ENCODE measurements at regions of chr5 and their contacts with region 1.

Region 1: GRCh38 chr5:96868603-96869371 is 7.5 kb upstream of the ERAP2 start:
- DNase-seq: peak; percentile 90
- H3K4me3 ChIP-seq: no peak overlapping the region
- H3K27ac ChIP-seq: no peak overlapping the region
- H3K4me1 ChIP-seq: peaks cover 47% of the 10 kb centered on the region
- CTCF ChIP-seq: peak; percentile 100

Region 2: DNA sequence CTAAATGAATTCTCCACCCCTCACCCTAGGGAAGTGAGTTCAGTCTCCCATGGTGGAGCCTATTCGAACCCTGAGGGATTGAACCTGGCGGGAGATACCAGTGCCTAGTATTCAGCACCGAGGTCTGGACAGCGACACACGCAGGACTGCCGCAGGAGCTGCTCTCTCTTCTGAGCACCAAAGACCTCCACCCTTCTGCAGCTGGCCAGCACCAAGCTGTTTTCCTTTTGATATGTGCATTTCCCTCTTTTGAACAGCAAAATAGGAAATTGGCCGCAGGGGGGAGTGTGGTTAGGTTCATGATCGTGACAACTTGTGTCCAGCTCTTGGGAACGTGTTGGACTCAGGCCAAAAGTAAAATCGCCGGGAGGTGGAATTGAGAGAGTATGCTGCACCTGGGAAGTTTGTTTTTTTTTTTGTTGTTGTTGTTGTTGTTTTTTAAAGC is 434.6 kb before region 1 on chr5:
- CTCF ChIA-PET with region 1: no interaction called
- POLR2A ChIA-PET with region 1: no interaction called
- intact Hi-C with region 1: no loop called
- DNase-seq: peak; percentile 5
- H3K4me3 ChIP-seq: no peak overlapping the region
- H3K27ac ChIP-seq: no peak overlapping the region
- H3K4me1 ChIP-seq: peaks cover 4% of the 10 kb centered on the region
- CTCF ChIP-seq: no peak

Region 3: GRCh38 chr5:96729156-96729555 is 139.6 kb before region 1 on chr5:
- CTCF ChIA-PET with region 1: no interaction called
- POLR2A ChIA-PET with region 1: no interaction called
- intact Hi-C with region 1: no loop called
- DNase-seq: no peak
- H3K4me3 ChIP-seq: no peak overlapping the region
- H3K27ac ChIP-seq: no peak overlapping the region
- H3K4me1 ChIP-seq: peaks cover 4% of the 10 kb centered on the region
- CTCF ChIP-seq: peak; percentile 72

Region 4: GRCh38 chr5:96807075-96807654 is 61.6 kb before region 1 on chr5:
- CTCF ChIA-PET with region 1: interaction called, 4 read pairs
- POLR2A ChIA-PET with region 1: interaction called, 9 read pairs
- intact Hi-C with region 1: loop called (anchors 2 kb)
- DNase-seq: peak; percentile 55
- H3K4me3 ChIP-seq: peak overlapping the region; percentile 84
- H3K27ac ChIP-seq: peak overlapping the region; percentile 75
- H3K4me1 ChIP-seq: peaks cover 46% of the 10 kb centered on the region
- CTCF ChIP-seq: no peak

Region 5: GRCh38 chr5:96963267-96963666 is 94.5 kb after region 1 on chr5:
- CTCF ChIA-PET with region 1: interaction called, 5 read pairs
- POLR2A ChIA-PET with region 1: interaction called, 53 read pairs
- intact Hi-C with region 1: loop called (anchors 2 kb)
- DNase-seq: peak; percentile 75
- H3K4me3 ChIP-seq: peak overlapping the region; percentile 82
- H3K27ac ChIP-seq: peak overlapping the region; percentile 98
- H3K4me1 ChIP-seq: peaks cover 48% of the 10 kb centered on the region
- CTCF ChIP-seq: no peak

Region 6: DNA sequence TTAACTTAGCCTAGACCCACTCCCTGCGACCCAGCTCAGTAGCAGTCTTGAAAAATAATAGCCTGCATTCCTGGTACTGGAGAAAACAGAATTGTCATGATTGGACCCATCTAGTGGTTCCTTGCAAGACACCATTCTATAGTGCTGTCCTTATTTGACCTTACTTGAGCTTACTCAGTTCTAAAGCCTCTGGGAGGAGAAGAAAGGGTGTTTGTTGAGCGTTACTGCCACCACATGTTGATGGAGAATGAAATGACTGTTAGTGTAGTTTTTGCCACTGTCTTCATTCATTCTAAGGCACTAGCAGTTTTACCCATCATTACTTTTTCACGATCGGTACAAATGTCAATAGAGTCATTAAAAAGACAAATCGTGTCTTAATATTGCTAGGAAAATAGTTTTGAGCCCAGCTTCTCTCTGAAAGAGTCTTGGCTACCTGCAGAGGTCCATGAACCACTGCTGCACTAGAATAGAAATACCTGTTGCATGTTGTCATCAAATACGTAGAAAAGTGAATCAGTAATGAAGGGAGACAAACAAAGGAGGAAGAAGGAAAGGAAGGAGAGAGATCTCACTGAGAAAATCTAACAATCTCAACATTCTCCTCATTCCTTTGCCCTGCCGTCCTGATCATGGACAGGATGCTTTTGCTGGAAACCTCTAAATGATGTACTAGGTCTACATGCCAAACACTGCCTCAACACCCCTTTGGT is 177.6 kb after region 1 on chr5:
- CTCF ChIA-PET with region 1: no interaction called
- POLR2A ChIA-PET with region 1: no interaction called
- intact Hi-C with region 1: loop called (anchors 5 kb)
- DNase-seq: peak; percentile 36
- H3K4me3 ChIP-seq: no peak overlapping the region
- H3K27ac ChIP-seq: no peak overlapping the region
- H3K4me1 ChIP-seq: no peaks in the 10 kb centered on the region
- CTCF ChIP-seq: peak; percentile 50

Region 7: DNA sequence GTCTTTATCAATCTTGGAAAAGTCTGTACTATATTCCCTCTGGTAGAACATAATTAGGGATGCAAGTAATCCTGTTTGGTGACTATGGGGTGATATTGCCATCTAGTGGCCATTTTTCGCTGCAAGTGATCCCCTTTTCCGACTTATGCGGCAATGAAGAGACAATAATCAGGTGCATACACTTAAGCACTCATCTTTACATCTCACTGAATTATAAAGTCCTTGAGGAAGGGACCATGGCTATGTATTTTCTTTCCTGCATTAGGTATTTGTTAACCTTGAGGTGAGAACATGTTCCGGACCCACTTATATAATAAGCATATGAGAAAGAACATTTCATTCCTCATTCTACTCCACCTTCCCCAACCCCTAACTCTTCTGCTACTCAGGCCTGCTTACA is 293.3 kb after region 1 on chr5:
- CTCF ChIA-PET with region 1: interaction called, 11 read pairs
- POLR2A ChIA-PET with region 1: interaction called, 10 read pairs
- intact Hi-C with region 1: loop called (anchors 1 kb)
- DNase-seq: peak; percentile 74
- H3K4me3 ChIP-seq: no peak overlapping the region
- H3K27ac ChIP-seq: no peak overlapping the region
- H3K4me1 ChIP-seq: peaks cover under 1% of the 10 kb centered on the region
- CTCF ChIP-seq: peak; percentile 100